ENCODE measurements at regions of chr9 and their contacts with region 1.

Region 1: GRCh38 chr9:117763314-117763713 is 59.1 kb downstream of the TLR4 start:
- DNase-seq: no peak
- ATAC-seq: no peak
- H3K4me3 ChIP-seq: no peak overlapping the region
- H3K27ac ChIP-seq: no peak overlapping the region
- H3K4me1 ChIP-seq: no peaks in the 10 kb centered on the region
- H3K27me3 ChIP-seq: no peaks in the 10 kb centered on the region
- CTCF ChIP-seq: no peak

Region 2: GRCh38 chr9:117718085-117718484 is 45.2 kb before region 1 on chr9:
- CTCF ChIA-PET with region 1: no interaction called
- POLR2A ChIA-PET with region 1: no interaction called
- in situ Hi-C with region 1: no loop called
- intact Hi-C with region 1: loop called (anchors 10 kb)
- DNase-seq: no peak
- ATAC-seq: no peak
- H3K4me3 ChIP-seq: no peak overlapping the region
- H3K27ac ChIP-seq: no peak overlapping the region
- H3K4me1 ChIP-seq: no peaks in the 10 kb centered on the region
- H3K27me3 ChIP-seq: no peaks in the 10 kb centered on the region
- CTCF ChIP-seq: no peak